Mucosa of descending colon (tissue), 3 donors: ENCODE measurements at regions of chr19 and their contacts with region 1.

Region 1: DNA sequence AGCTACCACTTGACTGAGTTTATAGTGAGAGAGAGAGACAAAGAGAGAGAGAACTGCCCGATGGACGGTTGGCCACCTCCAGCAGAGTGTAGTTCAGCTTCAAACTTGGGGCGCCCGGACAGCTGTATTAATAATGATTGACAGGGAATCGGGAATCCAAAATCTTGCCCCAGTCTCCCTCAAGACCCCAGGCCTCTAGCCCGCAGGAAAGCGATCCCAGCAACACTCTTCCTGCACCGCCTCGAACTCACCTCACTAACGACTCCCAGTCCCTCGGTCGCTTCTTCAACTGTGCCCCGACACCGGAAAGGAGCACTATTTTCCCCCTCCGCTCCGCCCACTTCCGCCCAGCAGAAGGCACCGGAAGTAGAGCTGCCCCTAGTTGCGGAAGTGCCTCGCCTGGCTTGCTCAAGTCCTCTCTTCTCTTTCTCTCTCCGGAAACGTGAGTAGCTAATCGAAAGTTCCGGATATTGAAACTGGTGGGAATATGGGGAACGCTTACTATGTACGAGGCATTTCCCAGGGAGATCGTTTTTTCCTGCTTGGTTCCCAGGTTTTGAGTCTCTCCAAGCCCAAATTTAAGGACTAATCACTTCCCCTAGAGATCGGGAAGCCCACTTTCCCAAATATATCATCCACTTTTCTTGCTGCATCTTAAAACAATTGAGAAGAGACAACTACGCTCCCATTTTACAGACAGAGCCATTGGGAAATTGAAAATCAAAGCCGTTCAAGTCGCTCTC is at the start of gene NOSIP:
- DNase-seq: peak; percentile 96 to 97 (median 97)
- ATAC-seq: peak; percentile 98
- H3K4me3 ChIP-seq: peak within 1 kb of the TSS; percentile 52
- H3K4me1 ChIP-seq: peaks cover 9% of the 10 kb centered on the region
- CTCF ChIP-seq: no peak
- total RNA-seq, gene NOSIP: 59.2 to 72.5 (median 66.3) TPM

Region 2: DNA sequence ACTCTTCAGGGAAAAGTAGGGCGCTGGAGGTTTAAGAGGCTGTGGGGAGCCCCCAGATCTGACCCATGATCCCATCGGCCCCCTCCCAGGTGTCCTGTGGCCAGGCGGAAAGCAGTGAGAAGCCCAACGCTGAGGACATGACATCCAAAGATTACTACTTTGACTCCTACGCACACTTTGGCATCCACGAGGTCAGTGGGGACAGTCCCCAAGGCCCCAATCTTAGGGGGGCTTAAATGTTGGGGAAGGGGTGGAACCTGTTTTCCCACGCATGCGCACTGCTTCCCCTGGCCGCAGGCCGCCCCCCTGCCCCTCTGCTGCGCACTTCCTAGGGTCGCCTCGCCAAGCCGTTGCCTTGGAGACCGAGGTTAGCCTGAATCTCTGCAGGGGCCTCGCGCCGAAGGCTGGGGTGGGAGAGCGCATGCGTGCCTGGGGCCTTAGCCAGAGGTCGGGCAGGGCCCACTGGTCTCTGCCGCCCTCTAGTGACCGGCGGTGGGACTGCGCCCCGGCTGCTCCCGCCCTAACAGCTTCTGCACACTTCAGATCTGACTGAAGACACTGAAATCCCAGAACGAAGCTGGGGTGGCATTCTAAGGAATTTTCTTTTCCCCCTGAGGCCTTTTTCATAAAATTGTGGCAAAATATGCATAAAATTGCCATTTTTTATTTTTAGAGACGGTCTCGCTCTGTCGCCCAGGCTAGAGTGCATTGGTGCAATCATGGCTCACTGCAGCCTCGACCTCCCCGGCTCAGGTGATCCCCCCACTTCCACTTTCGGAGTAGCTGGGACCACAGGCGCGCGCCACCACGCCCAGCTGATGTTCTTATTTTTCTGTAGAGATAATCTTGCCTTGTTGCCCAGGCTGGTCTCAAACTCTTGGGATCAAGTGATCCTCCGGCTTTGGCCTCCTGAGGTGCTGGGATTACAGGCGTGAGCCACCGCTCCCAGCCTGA is 100.2 kb after region 1 on chr19:
- intact Hi-C with region 1: loop called in 1 of 2 experiments (anchors 10 kb)
- DNase-seq: peak; percentile 91 to 96 (median 95)
- ATAC-seq: peak; percentile 49
- H3K4me3 ChIP-seq: no peak overlapping the region
- H3K4me1 ChIP-seq: peaks cover 27% of the 10 kb centered on the region
- CTCF ChIP-seq: peak; percentile 100